ENCODE measurements at regions of chr12 and their contacts with region 1.

Region 1: GRCh38 chr12:125183187-125184067 is 118.2 kb downstream of the AACS start:
- DNase-seq: peak; percentile 21
- ATAC-seq: peak; percentile 92
- H3K4me3 ChIP-seq: no peak overlapping the region
- H3K27ac ChIP-seq: no peak overlapping the region
- H3K4me1 ChIP-seq: no peaks in the 10 kb centered on the region
- H3K27me3 ChIP-seq: peaks cover 8 to 11% of the 10 kb centered on the region in 2 experiments
- CTCF ChIP-seq: peak; percentile 98 to 100 (median 99)
- EP300 ChIP-seq: no peak
- POLR2A ChIP-seq: no peak
- RAD21 ChIP-seq: peak; percentile 99

Region 2: DNA sequence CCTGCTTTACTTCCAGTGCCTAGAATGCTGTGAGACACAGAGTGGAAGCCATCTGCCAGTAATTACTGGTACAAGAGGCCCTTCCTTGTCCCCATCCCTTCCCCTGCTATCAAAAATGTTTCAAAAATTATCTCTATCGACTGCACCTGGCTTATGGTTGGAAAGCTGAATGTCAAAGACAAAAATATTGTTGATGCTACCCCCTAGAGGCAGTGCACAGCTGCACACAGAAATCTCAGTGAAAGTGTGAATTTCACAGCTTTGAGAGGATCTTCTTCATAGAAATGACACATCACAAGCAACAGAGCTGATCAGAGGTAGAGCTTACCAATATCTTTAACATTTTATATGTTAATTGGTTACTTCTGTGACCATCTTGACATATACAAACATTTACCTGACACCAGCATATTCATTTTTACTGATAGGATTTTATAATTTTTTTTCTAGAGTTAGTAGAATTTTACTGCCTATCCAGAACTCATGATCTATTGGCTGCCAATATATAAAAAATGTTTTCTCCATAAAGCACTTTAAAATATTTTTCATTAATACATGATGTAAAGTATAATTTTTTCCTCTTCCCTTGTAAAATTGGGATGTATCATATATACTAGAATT is 19.8 kb after region 1 on chr12:
- CTCF ChIA-PET with region 1: interaction called, 32 read pairs
- POLR2A ChIA-PET with region 1: no interaction called
- RAD21 ChIA-PET with region 1: interaction called, 9 read pairs
- SMC1A ChIA-PET with region 1: interaction called, 6 read pairs
- in situ Hi-C with region 1: no loop called
- intact Hi-C with region 1: no loop called
- DNase-seq: no peak
- ATAC-seq: peak; percentile 70
- H3K4me3 ChIP-seq: no peak overlapping the region
- H3K27ac ChIP-seq: no peak overlapping the region
- H3K4me1 ChIP-seq: no peaks in the 10 kb centered on the region
- H3K27me3 ChIP-seq: no peaks in the 10 kb centered on the region
- CTCF ChIP-seq: peak; percentile 49 to 70 (median 66)
- EP300 ChIP-seq: no peak
- POLR2A ChIP-seq: no peak
- RAD21 ChIP-seq: peak; percentile 43

Region 3: DNA sequence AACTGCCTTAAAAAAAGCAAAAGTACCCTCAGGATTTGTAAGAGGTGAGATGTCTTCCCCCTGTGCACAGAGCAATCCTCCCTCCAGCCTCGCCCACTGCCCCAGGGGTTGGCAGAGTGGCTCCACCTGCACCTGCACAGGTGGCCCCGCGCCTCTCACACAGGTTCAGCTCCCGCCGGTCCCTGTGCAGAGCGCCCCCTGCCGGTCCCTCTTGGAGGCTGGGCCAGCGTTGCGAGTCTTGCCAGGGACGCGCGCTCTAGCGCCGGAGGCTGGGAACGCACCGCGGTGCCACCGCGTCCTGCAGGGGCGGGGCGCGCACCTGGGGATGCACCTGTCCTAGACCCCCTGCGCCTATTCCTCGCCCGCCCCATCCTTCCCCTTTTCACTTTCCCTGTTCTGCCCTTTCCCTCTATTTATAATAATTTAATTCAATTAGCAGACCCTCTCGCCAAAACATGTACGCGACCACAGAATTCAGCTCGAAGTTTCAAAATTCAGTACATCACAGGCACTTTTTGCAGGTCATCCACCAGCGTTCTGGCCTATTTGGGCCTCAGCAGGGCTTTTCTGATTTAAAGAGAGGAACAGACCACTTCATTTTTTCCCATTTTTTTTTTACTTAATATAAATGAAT is 500.4 kb after region 1 on chr12:
- CTCF ChIA-PET with region 1: interaction called, 3 read pairs
- POLR2A ChIA-PET with region 1: no interaction called
- RAD21 ChIA-PET with region 1: no interaction called
- SMC1A ChIA-PET with region 1: no interaction called
- in situ Hi-C with region 1: no loop called
- intact Hi-C with region 1: loop called (anchors 10 kb)
- DNase-seq: no peak
- ATAC-seq: peak; percentile 96
- H3K4me3 ChIP-seq: no peak overlapping the region
- H3K27ac ChIP-seq: no peak overlapping the region
- H3K4me1 ChIP-seq: no peaks in the 10 kb centered on the region
- H3K27me3 ChIP-seq: no peaks in the 10 kb centered on the region
- CTCF ChIP-seq: peak; percentile 59 to 76 (median 65)
- EP300 ChIP-seq: no peak
- POLR2A ChIP-seq: no peak
- RAD21 ChIP-seq: peak; percentile 62

Region 4: GRCh38 chr12:126069549-126070165 is 886.2 kb after region 1 on chr12:
- CTCF ChIA-PET with region 1: no interaction called
- POLR2A ChIA-PET with region 1: no interaction called
- RAD21 ChIA-PET with region 1: no interaction called
- SMC1A ChIA-PET with region 1: no interaction called
- in situ Hi-C with region 1: no loop called
- intact Hi-C with region 1: loop called (anchors 10 kb)
- DNase-seq: no peak
- ATAC-seq: peak; percentile 73
- H3K4me3 ChIP-seq: no peak overlapping the region
- H3K27ac ChIP-seq: no peak overlapping the region
- H3K4me1 ChIP-seq: no peaks in the 10 kb centered on the region
- H3K27me3 ChIP-seq: no peaks in the 10 kb centered on the region
- CTCF ChIP-seq: peak; percentile 45 to 63 (median 61); a peak in 5 of 6 replicates
- EP300 ChIP-seq: no peak
- POLR2A ChIP-seq: no peak
- RAD21 ChIP-seq: peak; percentile 78

Region 5: DNA sequence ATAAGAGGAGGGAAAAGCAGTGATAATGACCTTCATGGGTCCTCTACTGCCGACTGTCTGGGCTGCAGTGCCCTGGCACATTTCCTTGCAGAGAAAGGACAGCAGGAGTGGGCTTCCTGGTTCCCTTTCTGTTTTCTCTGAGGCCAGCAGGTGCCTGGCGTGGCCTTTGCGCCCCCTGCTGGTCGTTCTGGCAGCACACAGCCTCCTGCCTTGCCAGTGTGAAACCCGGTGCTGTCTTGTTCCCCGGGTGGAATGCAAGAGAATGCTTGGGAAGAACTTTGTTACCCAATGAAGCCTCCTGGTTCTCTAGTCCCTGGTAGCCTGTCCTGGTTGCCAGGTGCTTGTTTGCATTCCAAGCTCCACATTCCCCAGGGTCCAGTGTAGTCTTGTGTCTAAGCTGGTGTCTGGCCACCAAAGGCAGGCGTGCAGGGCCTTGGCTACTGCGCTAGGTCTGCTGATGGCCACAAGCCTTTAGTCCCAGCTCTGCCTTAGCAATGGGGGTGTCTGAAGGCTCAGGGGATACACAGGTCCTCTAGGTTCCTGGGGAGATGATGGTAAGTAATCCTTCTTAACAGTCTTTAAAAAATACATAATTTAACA is 1691.1 kb after region 1 on chr12:
- CTCF ChIA-PET with region 1: interaction called, 3 read pairs
- POLR2A ChIA-PET with region 1: no interaction called
- RAD21 ChIA-PET with region 1: interaction called, 4 read pairs
- SMC1A ChIA-PET with region 1: no interaction called
- in situ Hi-C with region 1: loop called (anchors 25 kb)
- intact Hi-C with region 1: no loop called
- DNase-seq: peak; percentile 1
- ATAC-seq: peak; percentile 99
- H3K4me3 ChIP-seq: no peak overlapping the region
- H3K27ac ChIP-seq: no peak overlapping the region
- H3K4me1 ChIP-seq: no peaks in the 10 kb centered on the region
- H3K27me3 ChIP-seq: no peaks in the 10 kb centered on the region
- CTCF ChIP-seq: peak; percentile 87 to 90 (median 88)
- EP300 ChIP-seq: no peak
- POLR2A ChIP-seq: no peak
- RAD21 ChIP-seq: peak; percentile 85

Measured in GM12878 (cell line).